ENCODE measurements at regions of chr4 and their contacts with region 1.

Region 1: GRCh38 chr4:77095101-77095821 is 19.5 kb upstream of the CCNI start:
- DNase-seq: peak; percentile 53
- ATAC-seq: peak; percentile 100
- H3K4me3 Mint-ChIP-seq: no peak overlapping the region
- H3K27ac Mint-ChIP-seq: peak overlapping the region; percentile 8
- H3K4me1 Mint-ChIP-seq: peaks cover 27% of the 10 kb centered on the region
- H3K27me3 Mint-ChIP-seq: no peaks in the 10 kb centered on the region
- CTCF ChIP-seq: peak; percentile 86

Region 2: GRCh38 chr4:77022560-77023179 is 72.6 kb before region 1 on chr4:
- CTCF ChIA-PET with region 1: no interaction called
- POLR2A ChIA-PET with region 1: no interaction called
- intact Hi-C with region 1: no loop called
- DNase-seq: no peak
- ATAC-seq: no peak
- H3K4me3 Mint-ChIP-seq: no peak overlapping the region
- H3K27ac Mint-ChIP-seq: no peak overlapping the region
- H3K4me1 Mint-ChIP-seq: no peaks in the 10 kb centered on the region
- H3K27me3 Mint-ChIP-seq: no peaks in the 10 kb centered on the region
- CTCF ChIP-seq: no peak

Region 3: GRCh38 chr4:77052352-77052751 is 42.9 kb before region 1 on chr4:
- CTCF ChIA-PET with region 1: interaction called, 21 read pairs
- POLR2A ChIA-PET with region 1: interaction called, 3 read pairs
- intact Hi-C with region 1: loop called (anchors 1 kb)
- DNase-seq: peak; percentile 33
- ATAC-seq: peak; percentile 47
- H3K4me3 Mint-ChIP-seq: no peak overlapping the region
- H3K27ac Mint-ChIP-seq: no peak overlapping the region
- H3K4me1 Mint-ChIP-seq: no peaks in the 10 kb centered on the region
- H3K27me3 Mint-ChIP-seq: no peaks in the 10 kb centered on the region
- CTCF ChIP-seq: no peak

Region 4: GRCh38 chr4:77120886-77121508 is 25.7 kb after region 1 on chr4:
- CTCF ChIA-PET with region 1: interaction called, 13 read pairs
- POLR2A ChIA-PET with region 1: no interaction called
- intact Hi-C with region 1: loop called (anchors 2 kb)
- DNase-seq: no peak
- ATAC-seq: peak; percentile 80
- H3K4me3 Mint-ChIP-seq: peak overlapping the region; percentile 5
- H3K27ac Mint-ChIP-seq: no peak overlapping the region
- H3K4me1 Mint-ChIP-seq: peaks cover 58% of the 10 kb centered on the region
- H3K27me3 Mint-ChIP-seq: no peaks in the 10 kb centered on the region
- CTCF ChIP-seq: no peak

Region 5: DNA sequence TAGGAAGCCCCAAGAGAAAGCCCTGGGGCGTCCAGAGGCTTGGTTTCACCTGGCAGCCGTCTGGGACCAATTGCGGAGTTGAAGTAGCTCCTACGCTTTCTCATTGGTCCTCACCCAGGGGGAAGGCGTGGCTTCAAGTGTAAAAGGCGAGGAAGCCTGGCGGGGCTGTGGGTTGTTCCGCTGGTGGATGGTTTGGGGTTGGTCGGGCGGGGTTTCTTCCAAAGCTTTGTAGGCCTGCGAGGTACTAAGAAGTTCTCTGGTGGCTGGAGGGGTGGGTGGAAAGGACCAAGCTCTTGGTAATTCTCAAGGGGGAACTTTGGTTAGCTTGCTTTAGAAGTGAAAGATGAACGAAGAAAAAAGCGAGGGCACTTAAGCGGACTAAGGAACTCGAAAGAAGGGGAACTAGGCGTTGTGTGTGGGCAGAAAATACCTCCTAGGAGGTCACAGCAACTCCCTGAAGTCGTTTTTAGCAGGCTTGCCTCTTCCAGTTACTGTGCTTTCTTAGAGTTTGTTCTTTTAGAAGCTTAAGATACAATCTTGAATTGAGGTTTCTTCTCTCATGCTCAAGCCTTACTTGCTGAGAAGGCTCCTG is 98.3 kb after region 1 on chr4:
- CTCF ChIA-PET with region 1: interaction called, 263 read pairs
- POLR2A ChIA-PET with region 1: interaction called, 24 read pairs
- intact Hi-C with region 1: no loop called
- DNase-seq: peak; percentile 73
- ATAC-seq: peak; percentile 91
- H3K4me3 Mint-ChIP-seq: peak overlapping the region; percentile 85
- H3K27ac Mint-ChIP-seq: peak overlapping the region; percentile 97
- H3K4me1 Mint-ChIP-seq: peaks cover 55% of the 10 kb centered on the region
- H3K27me3 Mint-ChIP-seq: no peaks in the 10 kb centered on the region
- CTCF ChIP-seq: no peak

Region 6: DNA sequence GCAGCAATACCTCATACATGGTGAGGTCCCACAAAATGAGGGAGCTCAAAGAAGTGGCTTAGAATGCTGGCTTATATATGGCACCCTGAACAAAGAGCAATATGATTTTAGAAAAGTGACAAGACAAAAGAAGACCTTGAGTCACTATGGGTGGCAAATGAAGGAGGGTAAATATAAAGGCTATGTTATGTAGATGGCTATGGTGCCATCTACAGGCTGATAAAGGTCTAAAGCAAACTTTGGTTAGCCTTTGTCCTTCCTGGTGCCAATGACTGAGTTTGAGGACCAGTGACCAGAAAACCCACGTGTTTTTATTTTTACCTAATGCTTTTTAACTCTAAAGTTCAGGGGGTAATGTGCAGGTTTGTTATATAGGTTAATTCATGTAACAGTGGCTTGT is 213.6 kb after region 1 on chr4:
- CTCF ChIA-PET with region 1: no interaction called
- POLR2A ChIA-PET with region 1: no interaction called
- intact Hi-C with region 1: loop called (anchors 2 kb)
- DNase-seq: no peak
- ATAC-seq: peak; percentile 40
- H3K4me3 Mint-ChIP-seq: no peak overlapping the region
- H3K27ac Mint-ChIP-seq: no peak overlapping the region
- H3K4me1 Mint-ChIP-seq: no peaks in the 10 kb centered on the region
- H3K27me3 Mint-ChIP-seq: no peaks in the 10 kb centered on the region
- CTCF ChIP-seq: no peak